ENCODE measurements at regions of chr2 and their contacts with region 1.

Region 1: DNA sequence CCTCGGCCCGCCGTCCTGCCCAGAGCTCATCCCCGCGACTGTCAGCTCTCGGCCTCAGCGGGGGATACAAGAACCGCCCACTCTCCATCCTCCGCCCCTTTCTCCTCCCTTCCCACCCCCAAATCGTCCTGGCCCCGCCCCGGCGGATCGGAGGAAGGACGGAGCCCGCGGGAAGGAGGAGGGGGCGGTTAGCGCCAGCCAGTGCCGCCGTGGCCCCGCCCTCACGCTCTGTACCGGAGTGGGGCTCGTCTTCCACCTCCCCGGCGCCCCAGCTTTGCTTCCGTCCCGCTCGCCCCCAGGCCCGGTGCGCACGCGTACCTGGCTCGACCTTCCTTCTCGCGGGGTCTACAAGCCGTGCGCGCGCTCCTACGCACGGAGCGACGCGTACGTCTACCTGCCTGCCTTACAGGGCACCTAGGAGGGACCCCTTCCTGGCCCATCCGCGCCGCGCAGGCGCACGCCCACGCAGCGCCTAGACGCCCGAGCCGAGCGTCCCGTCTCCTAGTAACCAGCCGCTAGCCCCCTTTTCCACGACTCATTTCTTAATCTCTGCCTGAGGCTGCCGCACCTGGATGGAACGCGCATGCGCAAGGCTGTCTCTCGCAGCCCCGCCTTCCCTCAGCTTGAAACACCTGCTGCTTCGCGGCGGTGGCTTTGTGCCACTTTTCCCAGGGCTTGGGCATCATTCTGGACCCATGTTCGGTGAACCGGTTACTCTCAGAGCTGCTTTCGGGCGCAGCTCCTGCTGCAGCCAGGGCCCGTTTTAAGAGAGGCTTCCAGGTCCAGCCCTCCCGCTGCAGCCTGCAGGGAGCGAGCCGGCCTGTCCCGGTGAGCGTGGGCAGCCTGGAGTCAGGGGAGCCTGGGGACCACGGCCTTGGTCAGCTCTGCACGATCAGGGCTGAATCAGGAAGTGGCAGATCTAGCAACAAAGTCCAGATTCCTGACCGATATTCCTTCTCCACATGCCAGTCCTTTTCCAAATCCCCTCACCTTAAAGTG is at the start of gene C2orf15:
- DNase-seq: peak; percentile 98
- ATAC-seq: peak; percentile 95
- H3K4me3 Mint-ChIP-seq: peak within 1 kb of the TSS; percentile 94
- H3K27ac Mint-ChIP-seq: peak within 1 kb of the TSS; percentile 86
- H3K4me1 Mint-ChIP-seq: peaks cover 16% of the 10 kb centered on the region
- H3K27me3 Mint-ChIP-seq: no peaks in the 10 kb centered on the region
- total RNA-seq, gene C2orf15: 0.87 to 1.1 TPM

Region 2: DNA sequence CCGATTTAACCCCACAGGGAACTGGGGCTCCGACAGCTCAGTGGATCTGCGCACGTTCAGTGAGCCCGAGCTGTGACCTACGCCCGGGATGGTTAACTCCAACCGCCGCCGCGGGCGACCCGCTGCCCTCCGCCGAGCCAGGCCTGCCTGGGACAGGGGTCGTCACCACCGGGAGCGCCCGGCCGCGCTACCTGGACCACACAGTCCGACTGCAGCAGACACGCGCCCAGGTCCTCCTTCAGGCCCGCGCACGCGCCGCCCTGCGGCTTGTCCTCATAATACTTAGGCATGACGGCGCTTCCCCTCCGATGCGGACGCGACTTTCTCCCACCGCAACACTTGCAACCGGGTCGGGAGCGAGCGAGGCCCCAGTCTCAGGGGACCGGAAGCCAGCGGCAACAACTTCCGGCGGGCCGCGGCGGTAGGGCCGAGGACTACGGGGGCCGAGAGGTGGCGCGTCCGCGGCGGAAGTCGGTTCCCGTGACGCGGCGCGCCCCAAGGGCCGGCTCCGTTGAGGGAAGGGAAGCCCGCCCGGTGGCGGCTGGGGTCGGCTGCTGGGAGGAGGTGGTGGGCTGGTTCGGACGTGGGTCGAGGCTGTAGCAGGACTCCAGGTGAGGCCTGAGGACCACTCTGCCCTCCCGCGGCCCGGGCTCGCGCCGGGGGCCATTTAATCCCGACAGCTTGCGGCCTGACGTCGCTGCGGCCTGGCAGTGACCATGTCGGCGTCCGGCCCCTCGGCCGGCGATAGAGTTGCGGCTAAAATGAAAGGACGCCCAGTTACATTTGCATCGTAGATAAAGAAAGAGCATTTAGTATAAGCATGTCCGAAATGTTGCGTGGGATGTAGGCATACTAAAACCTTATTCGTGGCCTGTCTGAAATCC is 533.1 kb before region 1 on chr2 and contains the starts of genes COA5 and UNC50:
- CTCF ChIA-PET with region 1: no interaction called
- POLR2A ChIA-PET with region 1: no interaction called
- intact Hi-C with region 1: loop called in 1 of 2 experiments (anchors 1 kb)
- DNase-seq: peak; percentile 95
- ATAC-seq: peak; percentile 91
- H3K4me3 Mint-ChIP-seq: peak within 1 kb of the TSS; percentile 83
- H3K27ac Mint-ChIP-seq: peak within 1 kb of the TSS; percentile 94
- H3K4me1 Mint-ChIP-seq: peaks cover 61% of the 10 kb centered on the region
- H3K27me3 Mint-ChIP-seq: no peaks in the 10 kb centered on the region
- total RNA-seq, gene COA5: 17.7 to 33.2 TPM
- total RNA-seq, gene UNC50: 21.1 to 31.4 TPM

Region 3: GRCh38 chr2:99096728-99097127 is 44.7 kb before region 1 on chr2:
- CTCF ChIA-PET with region 1: no interaction called
- POLR2A ChIA-PET with region 1: no interaction called
- intact Hi-C with region 1: no loop called
- DNase-seq: no peak
- ATAC-seq: peak; percentile 88
- H3K4me3 Mint-ChIP-seq: no peak overlapping the region
- H3K27ac Mint-ChIP-seq: peak overlapping the region; percentile 44
- H3K4me1 Mint-ChIP-seq: peaks cover 12% of the 10 kb centered on the region
- H3K27me3 Mint-ChIP-seq: peaks cover 3% of the 10 kb centered on the region

Region 4: DNA sequence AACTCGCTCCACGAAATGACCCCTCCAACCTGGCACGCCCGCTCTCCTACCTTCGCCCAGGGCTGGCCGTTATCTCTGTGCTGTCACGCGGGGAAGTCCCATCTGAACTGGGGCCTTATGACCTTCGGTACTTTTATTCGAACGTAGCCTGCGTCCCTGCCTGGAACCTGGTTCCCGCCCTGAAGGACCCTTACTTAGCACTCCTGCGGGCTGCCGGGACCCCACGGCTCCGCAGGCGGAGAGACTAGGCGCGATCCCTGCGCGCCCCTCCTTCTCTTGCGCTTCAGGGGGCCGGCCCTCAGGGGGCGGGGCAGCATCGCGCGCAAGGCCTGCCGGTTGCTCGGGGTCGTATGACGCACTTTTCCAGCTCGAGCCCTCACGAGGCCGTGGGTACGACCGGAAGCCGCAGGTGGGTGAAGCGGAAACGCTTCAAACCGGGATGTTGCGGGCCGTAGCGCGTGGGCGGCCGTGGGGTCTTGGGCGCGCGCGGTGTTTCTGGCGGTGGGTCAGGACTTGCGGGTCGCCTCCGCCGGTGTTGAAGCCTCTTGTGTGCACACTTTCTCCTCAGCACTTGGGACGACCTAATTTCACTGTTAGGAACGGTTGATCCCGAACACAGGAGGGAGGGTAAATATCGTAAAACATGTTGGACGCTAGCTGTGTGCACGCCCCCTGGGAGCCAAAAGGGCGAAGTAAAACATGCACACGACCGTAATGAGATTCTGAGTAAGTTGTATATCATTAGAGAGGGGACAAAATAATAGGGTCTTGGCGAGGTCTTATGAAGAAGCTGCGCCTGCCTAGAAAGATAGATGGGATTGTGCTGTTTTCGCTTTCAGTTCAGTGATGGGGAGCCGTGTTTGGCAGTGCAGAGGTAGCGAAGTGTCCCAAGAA is 13.5 kb after region 1 on chr2 and contains the starts of genes LIPT1 and TSGA10:
- CTCF ChIA-PET with region 1: no interaction called
- POLR2A ChIA-PET with region 1: interaction called, 15 read pairs
- intact Hi-C with region 1: loop called (anchors 1 kb)
- DNase-seq: peak; percentile 96
- ATAC-seq: peak; percentile 94
- H3K4me3 Mint-ChIP-seq: no peak within 1 kb of the TSS
- H3K27ac Mint-ChIP-seq: peak within 1 kb of the TSS; percentile 93
- H3K4me1 Mint-ChIP-seq: peaks cover 36% of the 10 kb centered on the region
- H3K27me3 Mint-ChIP-seq: no peaks in the 10 kb centered on the region
- total RNA-seq, gene LIPT1: 4.6 to 4.7 TPM
- total RNA-seq, gene TSGA10: 6.4 to 9.4 TPM

Region 5: DNA sequence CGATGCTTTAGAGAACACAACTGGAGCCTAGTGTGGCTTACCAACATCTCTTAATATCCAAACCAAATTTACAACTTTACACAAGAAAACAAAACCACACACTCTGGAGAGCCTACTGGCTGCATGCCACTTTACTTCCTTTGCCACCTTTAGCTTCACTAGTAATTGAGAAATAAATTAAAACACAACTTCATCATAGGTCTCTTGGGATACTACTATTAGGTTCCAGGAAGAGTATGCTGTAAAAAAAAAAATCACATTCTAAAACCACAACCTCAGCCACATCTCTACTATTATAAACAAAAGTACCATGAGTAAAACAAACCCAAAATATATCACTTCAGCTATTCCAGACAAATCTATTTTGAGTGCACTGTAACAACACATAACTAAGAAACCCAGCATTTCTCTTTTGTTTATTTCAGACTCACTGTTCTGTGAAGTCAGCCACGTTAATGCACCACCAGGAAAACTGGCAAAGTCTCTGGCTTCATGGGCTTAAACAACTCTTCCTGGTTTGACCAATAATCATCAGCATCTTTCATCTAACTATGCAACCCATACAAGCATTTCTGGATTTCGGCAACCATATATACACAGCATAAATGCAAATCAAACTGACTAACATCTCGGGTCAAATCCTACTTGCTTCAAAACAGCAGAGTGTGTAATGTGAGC is 289.3 kb after region 1 on chr2:
- CTCF ChIA-PET with region 1: no interaction called
- POLR2A ChIA-PET with region 1: no interaction called
- intact Hi-C with region 1: no loop called
- DNase-seq: no peak
- ATAC-seq: peak; percentile 16
- H3K4me3 Mint-ChIP-seq: no peak overlapping the region
- H3K27ac Mint-ChIP-seq: no peak overlapping the region
- H3K4me1 Mint-ChIP-seq: peaks cover 7% of the 10 kb centered on the region
- H3K27me3 Mint-ChIP-seq: no peaks in the 10 kb centered on the region